H1 (cell line): ENCODE measurements at regions of chr1 and their contacts with region 1.

Region 1: DNA sequence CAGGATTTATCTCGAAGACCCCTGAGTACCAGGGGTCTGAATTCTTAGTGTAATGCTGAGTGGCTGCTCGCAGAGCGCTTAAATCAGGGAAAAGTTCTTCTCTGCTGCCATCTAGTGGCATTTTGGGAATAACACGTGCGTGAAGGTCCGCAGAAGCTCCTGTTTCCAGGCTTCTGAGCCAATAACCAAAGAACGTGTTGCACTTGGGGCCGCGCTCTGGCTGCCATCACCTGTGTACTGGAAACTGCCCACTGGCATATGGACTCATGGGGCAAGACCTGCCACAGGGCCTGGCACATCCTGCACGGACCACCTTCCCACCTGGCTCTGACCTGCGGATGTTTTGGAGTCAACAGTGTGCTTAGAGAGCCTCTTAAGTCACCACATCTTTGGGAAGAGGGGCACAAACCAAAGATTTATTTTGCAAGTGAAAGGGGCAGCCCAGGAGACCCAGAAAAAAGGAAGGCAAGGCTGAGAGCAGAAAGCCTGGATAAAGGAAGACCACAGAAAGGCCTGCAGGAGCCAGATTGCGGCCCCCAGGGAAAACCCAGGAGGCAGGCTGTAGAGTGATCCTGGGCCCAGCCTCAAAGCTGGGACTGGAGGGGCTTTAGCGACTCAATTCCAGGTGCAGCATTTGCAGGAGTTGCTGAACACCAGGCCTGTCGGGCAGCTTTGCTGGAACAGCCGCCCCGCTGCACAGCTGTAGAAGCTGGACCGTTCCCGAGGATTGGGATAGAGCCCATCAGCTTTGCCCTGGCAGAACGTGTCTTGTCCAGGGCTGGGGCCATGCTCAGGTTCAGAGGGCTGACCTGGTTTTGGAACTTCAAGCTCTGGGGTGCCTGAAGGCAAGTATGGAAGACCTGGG is 13.0 kb downstream of the CHIT1 start:
- DNase-seq: peak; percentile 71 to 86
- H3K4me3 ChIP-seq: peak overlapping the region in 2 of 4 experiments; percentile 17 to 40; a peak in 3 of 8 replicates
- H3K27ac ChIP-seq: no peak overlapping the region
- H3K4me1 ChIP-seq: peaks cover 0 to 12% (median 11%) of the 10 kb centered on the region in 4 experiments; a peak in 6 of 7 replicates
- H3K27me3 ChIP-seq: no peaks in the 10 kb centered on the region
- CTCF ChIP-seq: peak; percentile 29 to 85 (median 78)
- EP300 ChIP-seq: no peak
- POLR2A ChIP-seq: no peak
- RAD21 ChIP-seq: peak; percentile 87 to 91

Region 2: GRCh38 chr1:203038891-203039608 is 177.5 kb before region 1 on chr1:
- CTCF ChIA-PET with region 1: interaction called, 216 read pairs
- POLR2A ChIA-PET with region 1: interaction called, 3 read pairs
- DNase-seq: peak in 1 of 2 experiments; percentile 86
- H3K4me3 ChIP-seq: no peak overlapping the region
- H3K27ac ChIP-seq: no peak overlapping the region
- H3K4me1 ChIP-seq: peaks cover 2 to 15% (median 5%) of the 10 kb centered on the region in 4 experiments
- H3K27me3 ChIP-seq: no peaks in the 10 kb centered on the region
- CTCF ChIP-seq: peak; percentile 87 to 97 (median 88)
- EP300 ChIP-seq: no peak
- POLR2A ChIP-seq: no peak
- RAD21 ChIP-seq: peak; percentile 88 to 94

Region 3: DNA sequence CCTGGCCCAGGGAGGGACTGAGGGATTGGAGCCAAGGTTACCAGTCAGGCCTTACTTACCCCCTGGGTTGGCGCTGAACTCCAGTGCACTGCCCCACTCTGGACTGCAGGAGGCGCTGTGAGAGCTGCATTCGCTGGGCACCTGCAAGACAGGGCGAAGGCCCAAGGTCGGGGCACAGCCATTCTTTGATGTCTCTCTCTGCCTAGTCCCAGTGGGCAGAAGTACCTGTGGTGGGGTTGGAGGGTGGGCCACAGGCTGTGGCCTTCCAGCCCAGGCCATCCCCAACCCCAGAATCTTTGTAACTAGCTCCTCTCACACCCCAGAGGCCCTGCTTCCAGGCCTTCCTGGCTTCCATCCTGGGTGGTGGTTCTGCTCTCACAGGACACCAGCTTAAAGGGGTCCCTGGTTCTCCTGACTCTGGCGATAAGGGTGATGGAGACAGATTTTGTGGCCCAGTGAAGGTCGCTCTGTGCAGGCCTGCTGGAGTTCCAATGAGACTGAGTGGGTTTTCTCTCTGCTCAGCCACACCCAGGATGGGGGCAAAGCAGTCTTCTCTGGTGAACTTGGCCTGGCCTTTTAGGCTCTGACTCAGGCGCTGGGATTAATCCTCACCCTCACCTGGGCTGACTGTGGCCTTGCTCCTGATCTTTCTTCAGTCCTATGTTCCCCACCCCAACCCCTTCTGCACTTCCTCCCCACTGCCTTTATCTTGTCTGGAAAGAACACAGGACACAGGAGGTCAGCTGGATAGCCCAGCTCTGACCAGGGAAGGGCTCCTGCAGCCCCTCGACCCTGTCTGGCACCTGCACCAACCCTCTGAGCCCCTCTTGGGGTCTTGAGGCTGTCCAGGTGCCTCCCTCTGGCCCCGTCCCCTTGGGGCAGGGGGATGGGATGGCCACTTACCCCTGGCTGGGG is 131.7 kb before region 1 on chr1:
- CTCF ChIA-PET with region 1: interaction called, 96 read pairs
- POLR2A ChIA-PET with region 1: no interaction called
- DNase-seq: peak; percentile 47 to 92
- H3K4me3 ChIP-seq: no peak overlapping the region
- H3K27ac ChIP-seq: no peak overlapping the region
- H3K4me1 ChIP-seq: peaks cover 9 to 14% (median 11%) of the 10 kb centered on the region in 4 experiments
- H3K27me3 ChIP-seq: 0 out of 7 replicates have a peak, but pooled peaks cover 0 to 2% (median 0%) of the 10 kb centered on the region in 4 experiments
- CTCF ChIP-seq: peak; percentile 90 to 96 (median 96)
- EP300 ChIP-seq: no peak
- POLR2A ChIP-seq: no peak
- RAD21 ChIP-seq: peak; percentile 68 to 77

Region 4: DNA sequence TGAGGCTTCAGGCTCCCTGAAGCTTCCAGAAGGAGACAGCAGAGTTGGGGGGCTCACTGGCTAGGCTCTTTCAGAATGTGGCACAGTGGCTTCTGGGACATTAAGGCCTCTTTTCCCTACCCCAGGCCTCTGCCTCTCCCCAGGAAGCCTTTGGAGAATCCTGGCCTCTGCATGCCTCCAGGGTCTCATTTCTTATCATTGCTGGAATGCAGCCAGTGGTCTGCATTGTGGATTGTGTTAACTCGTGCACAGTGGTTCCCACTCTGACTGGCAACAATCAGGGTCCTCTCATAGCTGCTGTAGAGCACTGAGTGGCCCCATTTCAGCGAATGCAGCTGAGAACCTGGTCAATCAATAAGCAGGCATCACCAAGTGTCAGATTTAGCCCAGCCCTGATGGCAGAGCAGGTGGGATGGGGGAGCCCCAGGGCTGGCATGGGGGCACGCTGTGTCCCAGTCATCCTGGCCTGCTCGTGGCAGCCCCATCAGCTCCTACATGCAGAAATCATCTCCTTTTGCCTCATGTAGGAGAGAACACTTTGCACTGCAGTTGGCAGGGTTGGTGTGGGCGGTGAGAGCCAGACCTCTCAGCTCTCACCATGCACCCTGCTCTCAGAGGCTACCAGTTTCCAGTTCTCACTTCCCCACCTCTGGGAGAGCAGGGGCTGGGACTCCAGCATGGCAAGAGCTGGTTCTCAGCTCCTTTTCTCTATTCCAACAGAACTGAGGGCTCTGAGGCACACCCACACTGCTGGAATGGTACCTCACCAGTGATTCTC is 75.6 kb before region 1 on chr1:
- CTCF ChIA-PET with region 1: interaction called, 13 read pairs
- POLR2A ChIA-PET with region 1: no interaction called
- DNase-seq: no peak
- H3K4me3 ChIP-seq: no peak overlapping the region
- H3K27ac ChIP-seq: no peak overlapping the region; the same call in 1 of the 2 replicates
- H3K4me1 ChIP-seq: peaks cover 0 to 7% (median under 1%) of the 10 kb centered on the region in 4 experiments; a peak in 2 of 7 replicates
- H3K27me3 ChIP-seq: no peaks in the 10 kb centered on the region
- CTCF ChIP-seq: no peak
- EP300 ChIP-seq: no peak
- POLR2A ChIP-seq: no peak
- RAD21 ChIP-seq: no peak

Region 5: DNA sequence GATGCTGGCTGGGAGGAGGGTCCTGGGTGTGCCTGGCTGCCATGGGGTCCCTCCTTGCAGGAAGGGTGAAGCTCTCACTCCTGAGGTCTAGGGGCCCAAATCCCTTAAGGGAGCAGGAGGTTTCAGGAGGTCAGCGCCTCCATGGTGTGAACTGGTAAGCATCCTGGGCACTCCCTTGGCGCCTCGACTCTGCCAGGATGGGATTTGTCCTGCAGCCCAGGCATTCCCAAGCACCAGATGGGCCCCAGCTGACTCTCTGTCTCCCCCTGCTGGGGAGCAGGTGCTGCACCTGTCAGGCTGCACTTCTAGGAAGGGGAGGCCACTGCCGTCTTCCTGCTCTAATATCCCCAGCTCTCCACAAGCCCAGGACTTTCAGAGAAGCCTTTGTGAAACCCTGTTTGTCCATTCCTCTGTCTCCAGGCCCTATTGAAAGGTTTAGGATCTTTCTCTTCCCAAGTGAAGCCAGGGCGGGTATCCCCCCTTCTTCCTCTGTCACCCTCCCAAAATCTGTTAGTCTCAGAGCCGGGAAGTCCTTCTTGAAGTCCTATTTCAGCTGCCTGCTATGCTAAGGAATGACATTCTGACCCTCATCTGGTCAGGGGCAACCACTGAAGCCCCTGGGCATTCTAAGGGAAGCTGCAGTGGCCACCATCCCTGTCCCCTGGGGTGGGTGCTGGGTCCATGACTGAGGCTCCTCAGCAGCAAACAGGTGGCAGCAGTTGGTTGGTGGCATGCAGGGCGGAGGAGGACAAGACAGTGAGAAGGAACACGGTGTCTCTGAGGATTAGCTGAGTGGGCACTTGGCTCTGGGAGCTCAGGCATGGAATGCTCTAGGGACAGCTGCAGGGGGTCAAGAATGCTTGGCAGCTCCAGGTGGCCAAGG is 44.1 kb before region 1 on chr1:
- CTCF ChIA-PET with region 1: interaction called, 155 read pairs
- POLR2A ChIA-PET with region 1: no interaction called
- DNase-seq: peak; percentile 68 to 92
- H3K4me3 ChIP-seq: no peak overlapping the region
- H3K27ac ChIP-seq: no peak overlapping the region
- H3K4me1 ChIP-seq: peaks cover 0 to 7% (median under 1%) of the 10 kb centered on the region in 4 experiments; a peak in 3 of 7 replicates
- H3K27me3 ChIP-seq: no peaks in the 10 kb centered on the region
- CTCF ChIP-seq: peak; percentile 97 to 99 (median 97)
- EP300 ChIP-seq: no peak
- POLR2A ChIP-seq: no peak
- RAD21 ChIP-seq: peak; percentile 82 to 90

Region 6: DNA sequence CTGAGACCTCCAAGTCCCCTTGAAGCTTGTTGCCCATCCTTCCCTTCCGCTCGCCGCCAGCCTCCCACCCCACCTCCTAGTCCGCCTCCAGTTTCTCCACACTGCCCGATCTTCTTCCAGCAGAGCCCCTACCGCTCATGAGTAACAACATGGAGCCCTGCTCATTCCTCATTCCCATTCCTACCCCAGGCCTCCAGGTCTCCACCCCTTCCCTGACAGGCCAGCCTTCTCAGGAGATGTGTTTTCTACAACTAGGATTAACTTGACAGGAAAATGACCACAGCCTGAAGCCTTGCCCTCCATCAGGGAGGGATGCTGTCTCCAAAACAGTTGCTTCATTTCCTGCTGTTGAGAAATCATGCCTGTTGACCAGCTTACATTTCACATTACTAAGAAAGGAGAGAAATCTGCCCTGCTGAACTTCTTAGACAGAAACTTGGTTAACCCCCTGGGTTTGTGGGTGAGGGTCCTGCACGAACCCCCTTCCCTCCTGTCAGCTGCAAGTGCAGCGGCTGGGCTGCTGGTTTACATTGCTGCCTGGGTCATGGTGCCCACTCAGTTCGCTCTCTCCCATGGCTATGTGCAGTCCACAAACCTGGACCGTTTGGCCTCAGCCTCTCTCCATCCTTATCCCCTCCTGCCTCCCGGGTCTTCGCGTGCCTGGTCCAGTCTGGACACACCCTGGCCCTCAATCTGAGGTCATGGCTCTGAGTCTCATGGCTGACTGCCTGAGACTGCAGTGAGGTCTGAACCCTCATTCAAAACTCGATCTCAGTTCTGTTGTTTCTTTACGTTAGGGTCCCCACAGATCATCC is 13.9 kb before region 1 on chr1:
- CTCF ChIA-PET with region 1: interaction called, 56 read pairs
- POLR2A ChIA-PET with region 1: no interaction called
- DNase-seq: no peak
- H3K4me3 ChIP-seq: no peak overlapping the region
- H3K27ac ChIP-seq: no peak overlapping the region
- H3K4me1 ChIP-seq: peaks cover 0 to 7% (median 0%) of the 10 kb centered on the region in 4 experiments; a peak in 2 of 7 replicates
- H3K27me3 ChIP-seq: no peaks in the 10 kb centered on the region; a peak in 1 of 7 replicates
- CTCF ChIP-seq: no peak
- EP300 ChIP-seq: no peak
- POLR2A ChIP-seq: no peak
- RAD21 ChIP-seq: no peak

Region 7: GRCh38 chr1:203408486-203409427 is 192.3 kb after region 1 on chr1:
- CTCF ChIA-PET with region 1: no interaction called
- POLR2A ChIA-PET with region 1: no interaction called
- DNase-seq: no peak
- H3K4me3 ChIP-seq: no peak overlapping the region
- H3K27ac ChIP-seq: no peak overlapping the region
- H3K4me1 ChIP-seq: no peaks in the 10 kb centered on the region
- H3K27me3 ChIP-seq: no peaks in the 10 kb centered on the region
- CTCF ChIP-seq: no peak
- EP300 ChIP-seq: no peak
- POLR2A ChIP-seq: no peak
- RAD21 ChIP-seq: no peak

Region 8: DNA sequence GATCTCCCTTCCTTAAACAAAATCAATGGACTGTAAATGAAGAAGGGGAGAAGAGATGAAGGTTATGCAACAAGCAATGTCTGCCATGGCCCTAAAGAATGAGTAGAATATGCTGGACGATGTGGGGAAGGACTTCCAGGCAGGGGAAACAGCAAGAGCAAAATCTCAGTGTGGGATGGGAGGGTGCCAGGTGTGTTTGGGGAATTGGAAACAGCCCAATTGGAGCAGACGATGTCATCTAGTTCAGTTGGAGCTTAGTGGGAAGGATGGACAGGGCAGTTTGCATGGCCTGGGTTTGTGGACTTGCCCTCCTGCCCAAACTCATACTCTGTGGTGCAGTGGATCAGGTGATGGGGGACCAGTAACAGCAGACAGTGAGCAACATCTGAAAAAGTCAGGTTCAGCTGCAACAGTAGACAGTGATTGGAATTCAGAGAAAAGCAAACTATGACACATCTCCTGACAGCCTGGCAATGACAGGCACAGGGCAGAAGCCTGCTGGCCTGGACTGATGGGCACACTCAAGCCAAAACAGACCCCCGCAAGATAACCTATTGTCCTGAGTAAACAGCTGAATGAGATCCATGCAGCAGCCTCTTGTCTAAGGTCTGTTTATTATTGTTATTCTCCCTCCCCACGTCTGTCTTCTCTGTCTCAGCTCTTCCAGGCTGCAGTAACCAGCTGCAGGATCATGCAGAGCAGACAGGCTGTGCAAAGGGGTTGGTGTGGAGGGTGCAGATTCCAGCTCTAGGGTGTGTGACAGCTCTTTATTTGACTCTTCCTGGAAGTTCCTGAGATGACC is 208.6 kb after region 1 on chr1:
- CTCF ChIA-PET with region 1: no interaction called
- POLR2A ChIA-PET with region 1: no interaction called
- DNase-seq: no peak
- H3K4me3 ChIP-seq: no peak overlapping the region
- H3K27ac ChIP-seq: no peak overlapping the region
- H3K4me1 ChIP-seq: no peaks in the 10 kb centered on the region
- H3K27me3 ChIP-seq: no peaks in the 10 kb centered on the region
- CTCF ChIP-seq: no peak
- EP300 ChIP-seq: no peak
- POLR2A ChIP-seq: no peak
- RAD21 ChIP-seq: no peak